GM12878 (cell line): ENCODE measurements at regions of chr4 and their contacts with region 1.

Region 1: GRCh38 chr4:104966349-104967033 is 180.2 kb upstream of the TET2 start:
- DNase-seq: peak; percentile 96
- ATAC-seq: peak; percentile 95
- H3K4me3 ChIP-seq: peak overlapping the region; percentile 51; the same call in 1 of the 2 replicates
- H3K27ac ChIP-seq: peak overlapping the region; percentile 91
- H3K4me1 ChIP-seq: peaks cover 35% of the 10 kb centered on the region
- H3K27me3 ChIP-seq: no peaks in the 10 kb centered on the region
- CTCF ChIP-seq: no peak
- EP300 ChIP-seq: peak in 1 of 2 experiments; percentile 40; a peak in 1 of 4 replicates
- POLR2A ChIP-seq: no peak
- RAD21 ChIP-seq: peak; percentile 23; the same call in 1 of the 2 replicates

Region 2: DNA sequence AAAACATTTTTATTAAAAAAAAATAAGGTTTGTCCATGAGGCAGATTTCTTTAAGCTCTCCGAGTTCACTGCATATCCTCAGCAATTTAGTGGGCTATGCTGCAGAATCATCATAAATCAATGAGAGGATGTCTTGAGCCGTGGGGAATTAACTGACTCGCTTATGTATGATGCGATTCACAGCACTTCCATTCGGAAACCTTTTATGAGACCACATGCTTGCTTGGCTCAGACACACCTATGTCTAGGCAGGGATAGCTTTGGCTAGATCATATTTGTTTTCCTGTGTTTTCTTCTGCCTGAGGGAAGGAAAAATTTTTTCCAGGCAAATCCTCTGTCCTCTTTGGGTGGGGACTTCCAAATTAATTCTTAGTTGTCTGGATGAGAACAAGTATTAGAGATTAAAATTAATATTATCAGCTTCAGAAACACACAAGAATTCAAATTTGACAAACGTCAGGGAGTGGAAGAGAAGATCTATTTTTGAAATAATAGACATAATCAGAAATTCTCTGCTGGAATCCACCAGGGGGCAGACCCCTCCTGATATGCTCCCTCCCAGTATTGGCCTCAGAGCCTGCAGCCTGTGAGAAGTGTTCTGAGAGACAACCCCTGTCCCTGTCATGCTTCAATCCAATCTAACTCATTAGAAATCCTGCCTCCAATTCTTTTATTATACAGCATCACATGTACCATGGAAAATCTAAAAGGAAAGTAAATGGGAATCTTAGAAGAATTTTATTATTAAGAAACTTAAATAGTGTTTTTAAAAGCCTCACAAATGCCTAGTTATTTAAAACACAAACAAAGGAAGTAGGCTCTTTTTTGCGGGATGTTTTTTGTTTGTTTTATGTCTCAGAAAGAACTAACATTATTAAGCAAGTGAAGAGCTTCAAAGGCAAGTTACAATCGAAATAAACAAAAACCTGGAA is 901.6 kb before region 1 on chr4:
- CTCF ChIA-PET with region 1: no interaction called
- POLR2A ChIA-PET with region 1: no interaction called
- RAD21 ChIA-PET with region 1: no interaction called
- SMC1A ChIA-PET with region 1: no interaction called
- in situ Hi-C with region 1: no loop called
- intact Hi-C with region 1: loop called (anchors 10 kb)
- DNase-seq: peak; percentile 23
- ATAC-seq: peak; percentile 97
- H3K4me3 ChIP-seq: no peak overlapping the region
- H3K27ac ChIP-seq: no peak overlapping the region
- H3K4me1 ChIP-seq: no peaks in the 10 kb centered on the region
- H3K27me3 ChIP-seq: no peaks in the 10 kb centered on the region
- CTCF ChIP-seq: peak; percentile 56 to 74 (median 58); a peak in 5 of 6 replicates
- EP300 ChIP-seq: no peak
- POLR2A ChIP-seq: no peak
- RAD21 ChIP-seq: peak; percentile 88

Region 3: GRCh38 chr4:104868958-104869357 is 97.5 kb before region 1 on chr4:
- CTCF ChIA-PET with region 1: no interaction called
- POLR2A ChIA-PET with region 1: no interaction called
- RAD21 ChIA-PET with region 1: interaction called, 4 read pairs
- SMC1A ChIA-PET with region 1: interaction called, 3 read pairs
- in situ Hi-C with region 1: no loop called
- intact Hi-C with region 1: loop called (anchors 2 kb)
- DNase-seq: peak; percentile 79
- ATAC-seq: peak; percentile 93
- H3K4me3 ChIP-seq: peak overlapping the region; percentile 24; the same call in 1 of the 2 replicates
- H3K27ac ChIP-seq: peak overlapping the region; percentile 67
- H3K4me1 ChIP-seq: peaks cover 36% of the 10 kb centered on the region
- H3K27me3 ChIP-seq: no peaks in the 10 kb centered on the region
- CTCF ChIP-seq: no peak
- EP300 ChIP-seq: peak; percentile 92 to 96
- POLR2A ChIP-seq: no peak
- RAD21 ChIP-seq: peak; percentile 24; the same call in 1 of the 2 replicates

Region 4: GRCh38 chr4:104930298-104930697 is 36.2 kb before region 1 on chr4:
- CTCF ChIA-PET with region 1: interaction called, 5 read pairs
- POLR2A ChIA-PET with region 1: no interaction called
- RAD21 ChIA-PET with region 1: interaction called, 5 read pairs
- SMC1A ChIA-PET with region 1: interaction called, 6 read pairs
- in situ Hi-C with region 1: no loop called
- intact Hi-C with region 1: loop called (anchors 5 kb)
- DNase-seq: peak; percentile 51
- ATAC-seq: peak; percentile 54
- H3K4me3 ChIP-seq: no peak overlapping the region; the same call in 1 of the 2 replicates
- H3K27ac ChIP-seq: peak overlapping the region; percentile 62
- H3K4me1 ChIP-seq: peaks cover 14% of the 10 kb centered on the region
- H3K27me3 ChIP-seq: no peaks in the 10 kb centered on the region
- CTCF ChIP-seq: no peak
- EP300 ChIP-seq: no peak
- POLR2A ChIP-seq: no peak
- RAD21 ChIP-seq: no peak

Region 5: DNA sequence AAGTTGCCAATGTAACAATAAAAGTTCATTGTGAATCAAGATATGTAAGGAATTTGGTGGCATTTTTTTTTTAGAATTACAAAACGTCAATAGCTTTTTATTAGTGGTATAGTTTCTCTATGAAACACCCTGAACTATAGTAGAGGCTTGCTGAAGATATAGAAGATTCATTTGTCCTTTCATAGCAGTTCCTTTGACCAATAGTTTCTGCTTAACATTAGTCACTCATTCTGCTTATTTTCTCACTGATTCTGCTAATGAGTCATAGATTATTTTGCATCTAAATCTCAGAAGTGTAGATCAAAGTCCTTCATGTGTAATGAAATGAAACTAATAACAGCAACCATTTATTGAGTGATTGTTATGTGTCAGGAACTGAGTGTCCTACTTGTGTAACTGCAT is 24.8 kb before region 1 on chr4:
- CTCF ChIA-PET with region 1: interaction called, 3 read pairs
- POLR2A ChIA-PET with region 1: no interaction called
- RAD21 ChIA-PET with region 1: interaction called, 6 read pairs
- SMC1A ChIA-PET with region 1: interaction called, 14 read pairs
- in situ Hi-C with region 1: no loop called
- intact Hi-C with region 1: loop called (anchors 2 kb)
- DNase-seq: peak; percentile 37
- ATAC-seq: peak; percentile 80
- H3K4me3 ChIP-seq: no peak overlapping the region
- H3K27ac ChIP-seq: no peak overlapping the region
- H3K4me1 ChIP-seq: no peaks in the 10 kb centered on the region
- H3K27me3 ChIP-seq: no peaks in the 10 kb centered on the region
- CTCF ChIP-seq: no peak
- EP300 ChIP-seq: 0 out of 4 replicates have a peak, but pooled peaks of 1 of the 2 experiments have one; percentile 28
- POLR2A ChIP-seq: no peak
- RAD21 ChIP-seq: no peak